Heart left ventricle (tissue), 16 donors: ENCODE measurements at regions of chr15 and their contacts with region 1.

Region 1: DNA sequence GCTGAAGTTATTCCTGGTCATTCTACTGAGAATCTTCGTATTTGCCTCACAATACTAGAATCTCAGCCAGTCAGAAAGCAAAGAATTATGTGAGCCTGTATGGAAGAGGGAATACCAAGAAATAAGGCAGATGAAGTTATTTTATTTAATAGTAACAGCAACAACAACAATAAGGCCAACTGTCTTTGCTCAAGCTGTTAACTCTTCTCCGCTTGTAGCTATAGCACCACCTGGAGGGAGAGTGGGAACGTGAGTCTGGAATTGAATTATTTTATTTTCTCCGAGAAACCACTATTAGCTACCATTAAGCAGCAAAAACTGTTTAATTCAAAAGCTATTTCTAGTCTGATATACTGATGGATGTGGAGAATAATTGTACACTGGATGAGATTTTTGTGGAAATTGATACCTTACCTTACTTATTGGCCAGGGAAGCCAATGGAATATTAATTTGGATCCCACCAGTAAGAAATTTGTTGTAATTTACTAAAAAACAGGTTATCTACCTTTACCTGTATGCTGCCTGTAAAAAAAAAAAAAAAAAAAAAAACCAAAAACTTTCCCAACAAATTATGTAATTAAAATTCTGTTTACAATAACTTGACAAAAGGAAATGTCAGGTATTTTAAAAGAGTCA is 50.1 kb downstream of the CALML4 start:
- DNase-seq: peak in 3 of 5 donors; percentile 32 to 41 (median 38)
- ATAC-seq: peak in 3 of 4 donors; percentile 34 to 63 (median 58)
- H3K4me3 ChIP-seq: no peak overlapping the region
- H3K27ac ChIP-seq: no peak overlapping the region
- H3K4me1 ChIP-seq: peaks cover 0 to 11% (median 4%) of the 10 kb centered on the region in 12 donors
- H3K27me3 ChIP-seq: no peaks in the 10 kb centered on the region
- CTCF ChIP-seq: peak; percentile 56 to 90 (median 80)
- POLR2A ChIP-seq: no peak

Region 2: DNA sequence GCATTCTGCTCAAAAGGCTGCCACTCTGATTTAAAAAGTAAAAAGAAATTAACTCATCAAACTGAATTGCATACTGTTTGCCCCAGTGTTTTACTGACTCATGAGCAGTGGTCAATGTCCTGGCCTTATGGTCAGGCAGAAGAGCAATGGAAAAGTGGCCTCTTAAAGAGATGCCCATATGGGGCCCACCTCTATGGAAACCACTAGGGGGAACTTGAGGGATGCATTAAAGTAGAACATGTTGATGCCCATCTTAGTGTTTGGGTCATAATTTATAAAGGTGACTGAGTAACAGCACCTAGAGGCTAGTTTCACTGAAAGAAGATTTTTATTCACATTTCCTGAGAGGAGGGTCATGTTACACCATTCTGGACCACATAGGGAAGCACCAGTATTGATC is 248.7 kb before region 1 on chr15:
- intact Hi-C with region 1: loop called in 2 of 10 experiments (anchors 1 to 10 kb)
- DNase-seq: no peak
- ATAC-seq: peak; percentile 62 to 73 (median 63)
- H3K4me3 ChIP-seq: no peak overlapping the region
- H3K27ac ChIP-seq: peak overlapping the region in 1 of 12 donors; percentile 10
- H3K4me1 ChIP-seq: peaks cover 0 to 14% (median 0%) of the 10 kb centered on the region in 12 donors
- H3K27me3 ChIP-seq: no peaks in the 10 kb centered on the region
- CTCF ChIP-seq: peak in 9 of 12 donors; percentile 13 to 49 (median 36)
- POLR2A ChIP-seq: no peak

Region 3: GRCh38 chr15:68061171-68061570 is 93.9 kb before region 1 on chr15:
- intact Hi-C with region 1: loop called in 5 of 10 experiments (anchors 5 to 10 kb)
- DNase-seq: no peak
- ATAC-seq: no peak
- H3K4me3 ChIP-seq: no peak overlapping the region
- H3K27ac ChIP-seq: peak overlapping the region in 1 of 12 donors; percentile 32
- H3K4me1 ChIP-seq: peaks cover 0 to 76% (median 49%) of the 10 kb centered on the region in 12 donors
- H3K27me3 ChIP-seq: no peaks in the 10 kb centered on the region
- CTCF ChIP-seq: no peak
- POLR2A ChIP-seq: no peak